Mammary epithelial cell (primary cell): ENCODE measurements at regions of chr10 and their contacts with region 1.

Region 1: GRCh38 chr10:99435986-99436638 is 5.7 kb upstream of the GOT1 start:
- DNase-seq: peak; percentile 37
- H3K4me3 ChIP-seq: no peak overlapping the region
- H3K27ac ChIP-seq: no peak overlapping the region
- H3K4me1 ChIP-seq: peaks cover 3% of the 10 kb centered on the region
- H3K27me3 ChIP-seq: no peaks in the 10 kb centered on the region
- CTCF ChIP-seq: peak; percentile 42 to 52

Region 2: DNA sequence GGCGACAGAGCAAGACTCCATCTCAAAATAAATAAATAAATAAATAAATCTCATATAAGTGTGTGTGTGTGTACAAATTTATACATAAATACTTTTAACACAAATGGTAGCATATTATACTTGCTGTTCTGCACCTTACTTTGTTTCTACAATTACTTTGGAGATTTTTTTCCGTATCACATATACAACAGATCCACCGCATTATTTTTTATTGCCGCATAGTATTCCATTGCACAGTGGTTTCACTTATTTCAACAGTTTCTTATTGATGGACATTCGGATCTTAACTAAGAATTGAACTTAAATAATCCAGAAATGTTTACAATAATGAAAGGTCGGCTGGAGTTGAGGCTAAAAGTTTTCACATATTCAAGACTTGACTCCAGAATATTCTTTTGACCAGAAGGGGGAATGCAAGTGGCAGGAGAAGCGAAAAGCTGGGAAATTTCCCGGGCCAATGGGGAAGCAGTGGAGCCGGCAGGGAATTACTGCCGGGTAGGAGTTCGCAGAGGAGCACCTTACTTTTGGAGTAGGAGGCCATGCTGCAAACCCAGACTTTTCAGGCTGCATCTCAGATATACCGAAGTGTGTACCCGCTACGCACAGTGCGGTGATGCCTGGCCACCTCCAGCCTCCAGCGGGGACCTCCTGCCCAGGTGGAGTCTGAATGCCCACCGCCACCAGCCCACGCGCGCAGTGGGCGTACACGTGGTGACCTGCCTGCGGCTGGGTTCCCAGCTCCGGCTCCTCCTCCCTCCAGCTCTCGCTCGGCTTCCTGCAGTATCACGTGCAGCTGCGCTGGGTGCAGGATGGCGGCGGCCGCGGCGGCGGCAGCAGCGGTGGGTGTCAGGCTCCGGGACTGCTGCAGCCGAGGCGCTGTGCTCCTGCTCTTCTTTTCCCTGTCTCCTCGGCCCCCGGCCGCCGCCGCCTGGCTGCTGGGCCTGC is 107.3 kb before region 1 on chr10 and contains the start of gene CNNM1:
- CTCF ChIA-PET with region 1: interaction called, 14 read pairs
- dilution Hi-C with region 1: no loop called
- in situ Hi-C with region 1: no loop called
- intact Hi-C with region 1: no loop called
- DNase-seq: peak; percentile 23
- H3K4me3 ChIP-seq: peak within 1 kb of the TSS; percentile 44 to 57 (median 47)
- H3K27ac ChIP-seq: no peak within 1 kb of the TSS
- H3K4me1 ChIP-seq: peaks cover 16% of the 10 kb centered on the region
- H3K27me3 ChIP-seq: peaks cover 7% of the 10 kb centered on the region
- CTCF ChIP-seq: no peak
- total RNA-seq, gene CNNM1: 0.52 to 2.0 TPM

Region 3: GRCh38 chr10:99540657-99541531 is 104.8 kb after region 1 on chr10:
- CTCF ChIA-PET with region 1: no interaction called
- dilution Hi-C with region 1: no loop called
- in situ Hi-C with region 1: no loop called
- intact Hi-C with region 1: no loop called
- DNase-seq: peak; percentile 33
- H3K4me3 ChIP-seq: no peak overlapping the region
- H3K27ac ChIP-seq: no peak overlapping the region
- H3K4me1 ChIP-seq: no peaks in the 10 kb centered on the region
- H3K27me3 ChIP-seq: peaks cover 58% of the 10 kb centered on the region
- CTCF ChIP-seq: no peak